Lower leg skin (tissue), 4 donors: ENCODE measurements at regions of chr13 and their contacts with region 1.

Region 1: DNA sequence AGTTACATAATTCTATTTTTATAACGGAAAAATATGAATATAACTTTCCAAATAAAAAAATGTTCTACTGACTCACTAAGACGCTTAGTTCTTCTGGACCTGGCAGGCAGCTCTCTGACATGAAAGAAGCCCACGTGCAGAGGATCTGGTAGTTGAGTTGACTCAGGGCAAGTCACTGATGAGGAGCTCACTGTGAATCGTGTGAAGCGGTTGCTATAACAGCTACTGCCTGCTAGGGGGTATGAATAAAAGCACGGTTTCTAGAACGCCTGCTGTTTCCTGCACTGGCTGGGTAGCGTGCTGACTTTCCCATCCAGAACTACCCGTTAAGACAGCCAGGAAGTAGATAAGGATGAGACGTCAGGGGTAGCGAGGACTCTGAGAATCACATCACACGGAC is 54.7 kb upstream of the WASF3 start:
- DNase-seq: peak in 1 of 2 donors; percentile 62
- H3K4me3 ChIP-seq: no peak overlapping the region
- CTCF ChIP-seq: no peak
- POLR2A ChIP-seq: no peak

Region 2: GRCh38 chr13:26186118-26186870 is 316.5 kb before region 1 on chr13:
- intact Hi-C with region 1: loop called (anchors 10 kb)
- DNase-seq: peak; percentile 74 to 95
- H3K4me3 ChIP-seq: peak overlapping the region; percentile 42
- CTCF ChIP-seq: no peak
- POLR2A ChIP-seq: no peak

Region 3: DNA sequence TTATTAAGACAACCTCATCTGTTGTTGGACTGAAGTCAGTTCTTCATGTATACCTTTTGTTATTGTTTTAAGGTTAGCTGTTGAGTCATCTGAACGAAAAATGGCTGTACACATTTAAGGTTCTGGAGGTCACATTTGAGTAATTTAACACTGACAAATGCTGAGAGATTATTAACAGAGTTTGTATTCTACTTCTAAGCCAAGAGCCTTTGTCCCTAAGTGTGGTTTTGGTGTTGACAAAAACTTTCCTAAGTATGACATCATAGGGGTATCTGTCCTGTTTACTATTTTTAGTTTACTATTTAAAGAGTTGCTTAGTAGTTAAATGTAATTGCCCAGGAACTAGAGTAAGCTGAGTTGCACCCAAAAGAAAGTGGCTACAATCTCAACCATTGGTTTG is 176.9 kb before region 1 on chr13:
- intact Hi-C with region 1: no loop called
- DNase-seq: no peak
- H3K4me3 ChIP-seq: no peak overlapping the region
- CTCF ChIP-seq: no peak
- POLR2A ChIP-seq: no peak